Left cardiac atrium (tissue), 4 donors: ENCODE measurements at regions of chr10 and their contacts with region 1.

Region 1: DNA sequence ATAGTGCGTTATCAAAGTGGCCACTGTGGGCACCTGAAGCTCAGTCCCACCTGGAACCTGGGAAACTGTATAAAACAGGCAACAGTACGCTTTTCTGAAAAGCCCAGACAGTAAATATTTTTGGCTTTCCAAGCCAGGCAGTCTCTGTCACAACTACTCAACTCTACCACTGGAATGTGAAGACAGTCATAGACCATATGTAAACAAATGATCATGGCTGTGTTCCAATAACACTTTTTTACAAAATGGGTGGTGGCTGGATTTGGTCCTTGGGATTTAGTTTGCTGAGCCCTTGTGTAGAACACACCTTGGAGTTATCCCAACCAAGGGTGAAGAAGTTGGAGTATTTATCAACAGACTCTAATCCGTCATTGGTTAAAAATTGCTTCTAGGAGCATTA is 259.9 kb downstream of the SKIDA1 start:
- DNase-seq: no peak
- ATAC-seq: no peak

Region 2: GRCh38 chr10:21078410-21079329 is 187.0 kb before region 1 on chr10:
- intact Hi-C with region 1: loop called (anchors 2 to 5 kb)
- DNase-seq: peak; percentile 64
- ATAC-seq: peak; percentile 82 to 90

Region 3: GRCh38 chr10:21083871-21084295 is 181.7 kb before region 1 on chr10:
- intact Hi-C with region 1: loop called (anchors 2 to 5 kb)
- DNase-seq: no peak
- ATAC-seq: no peak